Gastrocnemius medialis (tissue), 4 donors: ENCODE measurements at regions of chr19 and their contacts with region 1.

Region 1: DNA sequence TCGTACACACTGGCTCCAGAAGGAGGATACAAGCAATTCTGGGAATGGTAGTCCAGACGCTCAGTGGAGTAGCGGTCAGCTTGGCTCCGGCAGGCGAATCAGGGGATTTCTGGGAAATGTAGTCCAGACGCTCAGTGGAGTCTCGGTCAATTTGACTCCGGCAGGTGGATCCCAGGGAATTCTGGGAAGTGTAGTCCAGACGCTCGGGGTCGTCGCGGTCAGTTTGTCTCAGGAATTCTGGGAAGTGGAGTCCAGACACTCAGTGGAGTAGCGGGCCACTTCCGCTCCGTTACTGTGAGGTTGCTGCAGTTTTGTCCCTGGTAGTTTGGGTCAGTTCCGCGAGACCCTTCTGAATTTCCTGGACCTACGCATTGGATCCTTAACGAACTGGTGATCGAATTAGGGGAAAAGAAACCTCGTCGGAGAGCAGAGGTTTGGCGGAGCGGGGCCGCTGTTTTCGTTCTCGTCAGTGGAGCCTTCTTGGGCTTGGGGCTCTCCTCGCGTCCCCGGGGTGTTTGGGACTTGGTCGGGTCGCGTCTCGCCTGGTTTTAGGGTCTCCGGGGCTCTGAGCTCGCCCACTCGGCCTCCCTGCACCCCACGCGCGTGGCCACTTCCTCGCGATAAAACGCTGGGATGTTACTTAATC is at the start of gene ZNF225:
- DNase-seq: peak; percentile 97 to 98
- ATAC-seq: peak; percentile 100
- H3K4me3 ChIP-seq: peak within 1 kb of the TSS; percentile 67 to 92 (median 86)
- H3K27ac ChIP-seq: peak within 1 kb of the TSS; percentile 73 to 86 (median 84)
- H3K4me1 ChIP-seq: peaks cover 14 to 18% of the 10 kb centered on the region in 2 donors
- H3K27me3 ChIP-seq: no peaks in the 10 kb centered on the region
- CTCF ChIP-seq: peak in 1 of 5 experiments; percentile 21
- POLR2A ChIP-seq: peak in 1 of 2 donors; percentile 17
- total RNA-seq, gene ZNF225: 0.75 to 1.4 (median 1.1) TPM

Region 2: GRCh38 chr19:43950834-43951645 is 162.2 kb before region 1 on chr19 and contains the start of gene ZNF221:
- in situ Hi-C with region 1: no loop called
- intact Hi-C with region 1: loop called (anchors 1 kb)
- DNase-seq: peak; percentile 87 to 90
- ATAC-seq: peak; percentile 100
- H3K4me3 ChIP-seq: peak within 1 kb of the TSS; percentile 70 to 97 (median 84)
- H3K27ac ChIP-seq: peak within 1 kb of the TSS; percentile 66 to 80 (median 74)
- H3K4me1 ChIP-seq: peaks cover 0 to 3% of the 10 kb centered on the region in 2 donors
- H3K27me3 ChIP-seq: no peaks in the 10 kb centered on the region
- CTCF ChIP-seq: peak in 4 of 5 experiments; percentile 19 to 48 (median 38)
- POLR2A ChIP-seq: no peak
- total RNA-seq, gene ZNF221: 0.76 to 15.3 (median 0.96) TPM

Region 3: DNA sequence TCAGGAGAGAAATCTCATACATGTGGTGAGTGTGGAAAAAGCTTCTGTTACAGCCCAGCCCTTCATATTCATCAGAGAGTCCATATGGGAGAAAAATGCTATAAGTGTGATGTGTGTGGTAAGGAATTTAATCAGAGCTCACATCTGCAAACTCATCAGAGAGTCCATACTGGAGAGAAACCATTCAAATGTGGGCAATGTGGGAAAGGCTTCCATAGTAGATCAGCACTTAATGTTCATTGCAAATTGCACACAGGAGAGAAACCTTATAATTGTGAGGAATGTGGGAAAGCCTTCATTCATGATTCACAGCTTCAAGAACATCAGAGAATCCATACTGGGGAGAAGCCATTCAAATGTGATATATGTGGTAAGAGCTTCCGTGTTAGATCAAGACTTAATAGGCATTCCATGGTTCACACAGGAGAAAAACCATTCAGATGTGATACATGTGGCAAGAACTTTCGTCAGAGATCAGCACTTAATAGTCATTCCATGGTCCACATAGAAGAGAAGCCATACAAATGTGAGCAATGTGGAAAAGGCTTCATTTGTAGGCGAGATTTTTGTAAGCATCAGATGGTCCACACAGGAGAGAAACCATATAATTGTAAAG is 147.1 kb before region 1 on chr19:
- in situ Hi-C with region 1: no loop called
- intact Hi-C with region 1: no loop called
- DNase-seq: no peak
- ATAC-seq: no peak
- H3K4me3 ChIP-seq: peak overlapping the region in 1 of 4 donors; percentile 35
- H3K27ac ChIP-seq: no peak overlapping the region
- H3K4me1 ChIP-seq: no peaks in the 10 kb centered on the region
- H3K27me3 ChIP-seq: no peaks in the 10 kb centered on the region
- CTCF ChIP-seq: no peak
- POLR2A ChIP-seq: no peak

Region 4: DNA sequence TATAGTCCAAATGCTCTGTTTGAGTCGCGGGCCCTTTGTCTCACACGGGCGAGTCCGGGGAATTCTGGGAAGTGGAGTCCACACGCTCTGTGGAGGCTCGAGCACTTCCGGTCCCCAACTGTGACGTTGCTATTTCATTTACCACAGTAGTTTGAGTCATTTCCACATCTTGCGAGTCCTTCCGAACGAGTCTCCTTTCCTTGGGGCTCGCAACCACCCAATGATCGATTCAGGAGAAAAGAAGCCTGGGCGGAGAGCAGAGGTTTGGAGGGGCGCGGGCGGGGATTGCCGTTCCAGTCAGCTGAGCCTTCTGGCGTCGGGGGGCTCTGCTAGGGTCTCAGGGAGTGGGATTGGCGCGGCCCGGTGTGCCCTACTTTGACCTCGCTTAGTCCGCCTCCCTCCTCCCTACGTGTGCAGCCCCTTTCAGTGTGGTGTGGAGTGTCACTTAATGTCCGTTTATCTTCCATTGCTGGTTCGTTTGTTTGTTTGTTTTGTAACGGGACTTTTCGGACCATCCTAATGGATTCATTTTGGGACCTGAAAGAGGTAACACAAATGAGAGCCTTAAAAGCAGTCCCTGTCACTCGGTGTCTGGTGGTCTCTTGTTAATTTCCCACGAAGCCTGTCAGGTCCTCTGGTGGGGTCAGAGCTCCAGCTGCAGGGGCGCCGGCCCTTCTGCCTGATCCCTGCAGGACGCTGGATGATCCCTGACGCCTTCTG is 87.9 kb before region 1 on chr19 and contains the start of gene ZNF222:
- in situ Hi-C with region 1: no loop called
- intact Hi-C with region 1: no loop called
- DNase-seq: peak; percentile 63 to 67
- ATAC-seq: peak; percentile 91 to 96
- H3K4me3 ChIP-seq: peak within 1 kb of the TSS; percentile 62 to 86 (median 78)
- H3K27ac ChIP-seq: peak within 1 kb of the TSS; percentile 58 to 71 (median 63)
- H3K4me1 ChIP-seq: no peaks in the 10 kb centered on the region
- H3K27me3 ChIP-seq: no peaks in the 10 kb centered on the region
- CTCF ChIP-seq: no peak
- POLR2A ChIP-seq: no peak
- total RNA-seq, gene ZNF222: 0.56 to 1.6 (median 1.1) TPM

Region 5: DNA sequence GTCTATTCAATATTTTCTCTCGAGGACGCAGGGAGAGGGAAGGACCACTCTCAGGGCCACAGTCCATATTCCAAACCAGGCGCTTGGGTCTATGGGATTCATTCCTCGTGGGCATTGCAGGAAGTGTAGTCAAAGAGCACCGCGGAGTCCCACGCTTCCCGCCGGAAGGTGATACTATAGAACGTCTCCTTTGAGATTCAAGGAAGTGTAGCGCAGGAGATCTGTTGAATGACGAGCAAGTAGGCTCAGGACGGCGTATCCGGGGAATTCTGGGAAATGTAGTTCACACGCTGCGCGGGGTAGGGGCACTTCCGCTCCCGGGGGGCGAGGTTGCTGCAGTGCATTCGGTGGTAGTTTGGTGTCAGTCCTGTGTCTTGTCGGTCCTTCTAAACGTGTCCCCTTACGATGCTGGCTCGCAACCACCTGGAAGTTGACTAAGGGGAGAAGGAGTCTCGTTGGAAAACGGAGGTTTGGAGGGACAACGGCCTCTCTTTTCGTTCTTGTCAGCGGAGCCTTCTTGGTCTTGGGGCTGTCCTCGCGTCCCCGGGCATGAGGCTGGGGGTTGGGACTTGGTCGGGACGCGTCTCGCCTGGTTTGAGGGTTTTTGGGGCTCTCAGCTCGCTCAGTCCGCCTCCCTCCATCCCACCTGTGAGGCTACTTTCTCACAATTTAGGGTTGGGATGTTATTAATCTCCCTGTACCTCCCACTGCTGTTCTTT is 41.3 kb before region 1 on chr19 and contains the start of gene ZNF284:
- in situ Hi-C with region 1: no loop called
- intact Hi-C with region 1: loop called (anchors 1 kb)
- DNase-seq: peak; percentile 82 to 87
- ATAC-seq: peak; percentile 100
- H3K4me3 ChIP-seq: peak within 1 kb of the TSS; percentile 60 to 83 (median 77)
- H3K27ac ChIP-seq: peak within 1 kb of the TSS; percentile 56 to 79 (median 59)
- H3K4me1 ChIP-seq: peaks cover 10 to 13% of the 10 kb centered on the region in 2 donors
- H3K27me3 ChIP-seq: no peaks in the 10 kb centered on the region
- CTCF ChIP-seq: no peak
- POLR2A ChIP-seq: peak in 1 of 2 donors; percentile 20
- total RNA-seq, gene ZNF284: 0.38 to 1.3 (median 0.63) TPM

Region 6: DNA sequence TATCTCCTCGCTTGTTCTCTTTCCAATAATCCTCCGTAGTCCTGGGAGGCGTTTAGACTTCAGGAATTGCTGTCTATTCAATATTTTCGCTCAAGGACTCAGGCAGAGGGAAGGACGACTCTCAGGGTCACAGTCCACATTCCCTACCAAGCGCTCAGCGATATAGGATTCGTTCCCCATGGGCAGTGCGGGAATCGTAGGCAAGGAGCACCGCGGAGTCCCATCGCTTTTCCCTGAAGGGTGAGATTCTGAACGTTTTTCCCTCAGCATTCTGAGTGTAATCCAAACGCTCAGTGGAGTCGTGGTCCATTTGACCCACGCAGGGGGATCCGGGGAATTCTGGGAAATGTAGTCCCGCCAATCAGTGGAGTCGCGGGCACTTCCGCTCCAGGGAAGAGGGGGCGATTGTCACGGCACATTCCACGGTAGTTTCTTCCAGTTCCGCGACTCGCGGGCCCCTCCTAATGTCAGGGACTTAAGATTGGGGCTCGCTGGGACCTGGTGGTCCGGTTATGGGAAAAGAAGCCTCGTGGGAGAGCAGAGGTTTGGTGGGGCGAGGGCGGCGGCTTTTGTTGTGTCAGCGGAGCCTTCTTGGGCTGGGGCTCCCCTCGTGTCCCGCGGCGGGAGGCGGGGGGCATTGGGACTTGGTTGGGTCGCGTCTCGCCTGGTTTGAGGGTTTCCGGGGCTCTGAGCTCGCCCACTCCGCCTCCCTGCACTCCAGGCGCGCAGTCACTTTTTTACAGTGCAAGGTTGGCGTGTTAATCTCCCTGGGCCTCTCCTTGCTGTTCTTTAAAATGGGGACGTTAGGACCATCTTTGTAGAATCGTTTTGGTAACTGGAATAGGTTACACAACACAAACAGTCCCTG is 28.2 kb after region 1 on chr19 and contains the start of gene ZNF234:
- in situ Hi-C with region 1: no loop called
- intact Hi-C with region 1: loop called (anchors 1 kb)
- DNase-seq: peak; percentile 78
- ATAC-seq: peak; percentile 98 to 99
- H3K4me3 ChIP-seq: peak within 1 kb of the TSS; percentile 85 to 98 (median 88)
- H3K27ac ChIP-seq: peak within 1 kb of the TSS; percentile 78 to 87 (median 82)
- H3K4me1 ChIP-seq: peaks cover 14 to 18% of the 10 kb centered on the region in 2 donors
- H3K27me3 ChIP-seq: no peaks in the 10 kb centered on the region
- CTCF ChIP-seq: no peak
- POLR2A ChIP-seq: peak in 1 of 2 donors; percentile 42
- total RNA-seq, gene ZNF234: 2.2 to 3.5 (median 2.9) TPM

Region 7: GRCh38 chr19:44228318-44228717 is 115.1 kb after region 1 on chr19:
- in situ Hi-C with region 1: no loop called
- intact Hi-C with region 1: no loop called
- DNase-seq: no peak
- ATAC-seq: no peak
- H3K4me3 ChIP-seq: no peak overlapping the region
- H3K27ac ChIP-seq: no peak overlapping the region
- H3K4me1 ChIP-seq: no peaks in the 10 kb centered on the region
- H3K27me3 ChIP-seq: no peaks in the 10 kb centered on the region
- CTCF ChIP-seq: no peak
- POLR2A ChIP-seq: no peak

Region 8: GRCh38 chr19:44304659-44305193 is 191.5 kb after region 1 on chr19 and contains the start of gene ZNF235:
- in situ Hi-C with region 1: loop called in 2 of 4 experiments (anchors 10 kb)
- intact Hi-C with region 1: loop called (anchors 1 kb)
- DNase-seq: peak; percentile 88 to 94
- ATAC-seq: peak; percentile 100
- H3K4me3 ChIP-seq: peak within 1 kb of the TSS; percentile 64 to 86 (median 78)
- H3K27ac ChIP-seq: peak within 1 kb of the TSS; percentile 77 to 87 (median 82)
- H3K4me1 ChIP-seq: peaks cover 3 to 12% of the 10 kb centered on the region in 2 donors
- H3K27me3 ChIP-seq: no peaks in the 10 kb centered on the region
- CTCF ChIP-seq: no peak
- POLR2A ChIP-seq: peak in 1 of 2 donors; percentile 42
- total RNA-seq, gene ZNF235: 1.9 to 3.3 (median 2.1) TPM